HepG2 (cell line): ENCODE measurements at regions of chr9 and their contacts with region 1.

Region 1: DNA sequence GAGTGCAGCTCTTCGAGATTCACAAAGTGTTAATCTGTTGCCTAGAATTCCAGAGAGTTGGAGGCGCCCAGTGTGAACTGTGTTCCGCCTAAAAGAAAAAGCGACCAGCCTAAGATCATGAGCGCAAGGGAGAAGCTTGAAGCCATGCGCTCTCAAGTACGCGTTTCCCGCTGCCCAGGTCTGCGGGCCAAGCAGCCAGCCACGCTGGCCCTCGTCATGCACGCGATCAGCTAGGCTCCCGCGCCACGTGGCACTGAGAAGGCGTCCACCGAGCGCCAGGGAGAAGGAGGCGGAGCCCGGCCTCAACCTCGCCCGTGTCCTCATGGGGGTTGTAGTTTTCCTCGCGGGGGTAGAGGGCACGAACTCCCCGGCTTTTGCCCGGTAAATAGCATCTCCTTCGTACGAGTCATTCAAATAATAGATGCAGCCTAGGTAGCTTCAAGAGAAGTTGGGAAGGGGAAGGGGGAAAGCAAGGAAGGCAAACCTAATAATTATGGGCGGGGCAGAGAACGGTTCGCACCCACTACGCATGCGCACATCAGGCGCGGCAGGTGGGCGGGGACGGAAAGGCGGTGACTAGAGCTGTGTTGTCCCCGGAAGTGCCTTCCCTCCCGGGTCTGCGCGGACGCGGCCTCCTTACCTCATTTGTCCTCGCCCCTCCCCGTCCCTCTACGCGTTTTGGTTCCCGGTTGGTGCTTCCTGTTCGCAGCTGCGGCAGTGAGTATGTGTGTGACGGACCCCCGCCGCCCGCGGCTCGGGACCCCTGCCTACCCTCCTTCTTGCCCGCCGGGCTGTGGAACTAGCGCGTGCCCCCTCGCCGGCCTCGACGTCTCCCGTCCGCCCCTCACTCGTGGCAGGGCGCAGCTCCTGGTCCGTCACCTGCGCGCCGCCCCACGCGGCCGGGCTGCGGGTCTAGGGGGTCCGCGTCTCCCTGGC is at the start of gene ZCCHC7:
- DNase-seq: peak; percentile 87
- ATAC-seq: peak; percentile 98
- H3K4me3 ChIP-seq: peak within 1 kb of the TSS; percentile 69 to 87 (median 71)
- H3K27ac ChIP-seq: peak within 1 kb of the TSS; percentile 77
- H3K4me1 ChIP-seq: peaks cover 35% of the 10 kb centered on the region
- H3K27me3 ChIP-seq: no peaks in the 10 kb centered on the region
- CTCF ChIP-seq: no peak; the same call in 1 of the 2 replicates
- EP300 ChIP-seq: no peak
- POLR2A ChIP-seq: peak; percentile 88 to 91
- RAD21 ChIP-seq: no peak
- total RNA-seq, gene ZCCHC7: 13.6 and 15.9 TPM in 2 replicates

Region 2: GRCh38 chr9:36891341-36891959 is 228.7 kb before region 1 on chr9:
- CTCF ChIA-PET with region 1: no interaction called
- POLR2A ChIA-PET with region 1: no interaction called
- in situ Hi-C with region 1: no loop called
- intact Hi-C with region 1: no loop called
- DNase-seq: no peak
- ATAC-seq: no peak; the same call in 2 of the 3 replicates
- H3K4me3 ChIP-seq: no peak overlapping the region
- H3K27ac ChIP-seq: no peak overlapping the region
- H3K4me1 ChIP-seq: no peaks in the 10 kb centered on the region
- H3K27me3 ChIP-seq: peaks cover 1 to 48% of the 10 kb centered on the region in 2 experiments
- CTCF ChIP-seq: no peak
- EP300 ChIP-seq: no peak
- POLR2A ChIP-seq: no peak
- RAD21 ChIP-seq: no peak

Region 3: DNA sequence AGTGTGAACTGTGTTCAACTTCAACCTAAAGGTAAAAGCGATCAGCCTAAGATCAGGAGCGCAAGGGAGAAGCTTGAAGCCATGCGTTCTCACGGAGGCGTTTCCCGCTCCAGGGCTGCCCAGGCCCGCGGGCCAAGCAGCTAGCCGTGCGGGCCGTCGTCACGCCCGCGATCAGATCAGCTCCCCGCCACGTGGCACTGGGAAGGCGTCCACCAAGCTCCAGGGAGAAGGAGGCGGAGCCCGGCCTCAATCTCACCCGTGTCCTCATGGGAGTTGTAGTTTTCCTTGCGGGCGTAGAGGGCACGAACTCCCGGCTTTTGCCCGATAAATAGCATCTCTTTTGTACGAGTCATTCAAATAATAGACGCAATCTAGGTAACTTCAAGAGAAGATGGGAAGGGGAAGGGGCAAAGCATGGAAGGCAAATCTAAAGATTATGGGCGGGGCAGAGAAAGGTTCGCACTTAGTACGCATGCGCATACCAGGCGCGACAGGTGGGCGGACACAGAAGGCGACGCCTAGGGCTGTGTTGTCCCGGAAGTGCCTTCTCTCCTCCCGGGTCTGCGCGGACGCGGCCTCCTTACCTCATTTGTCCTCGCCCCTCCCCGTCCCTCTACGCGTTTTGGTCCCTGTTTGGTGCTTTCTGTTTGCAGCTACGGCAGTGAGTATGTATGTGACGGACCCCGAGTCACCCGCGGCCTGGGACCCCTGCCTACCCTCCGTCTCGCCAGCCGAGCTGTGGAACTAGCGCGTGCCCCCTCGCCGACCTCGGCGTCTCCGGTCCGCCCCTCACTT is 40.6 kb before region 1 on chr9:
- CTCF ChIA-PET with region 1: no interaction called
- POLR2A ChIA-PET with region 1: interaction called, 34 read pairs
- in situ Hi-C with region 1: no loop called
- intact Hi-C with region 1: no loop called
- DNase-seq: peak; percentile 91
- ATAC-seq: peak; percentile 98
- H3K4me3 ChIP-seq: peak overlapping the region; percentile 78 to 97 (median 87)
- H3K27ac ChIP-seq: peak overlapping the region; percentile 76
- H3K4me1 ChIP-seq: peaks cover 39% of the 10 kb centered on the region
- H3K27me3 ChIP-seq: 0 out of 5 replicates have a peak, but pooled peaks cover 0 to 3% of the 10 kb centered on the region in 2 experiments
- CTCF ChIP-seq: peak; percentile 16; the same call in 1 of the 2 replicates
- EP300 ChIP-seq: 0 out of 4 replicates have a peak, but pooled peaks of 1 of the 2 experiments have one; percentile 17
- POLR2A ChIP-seq: peak; percentile 80 to 84
- RAD21 ChIP-seq: peak; percentile 31; the same call in 1 of the 2 replicates

Region 4: DNA sequence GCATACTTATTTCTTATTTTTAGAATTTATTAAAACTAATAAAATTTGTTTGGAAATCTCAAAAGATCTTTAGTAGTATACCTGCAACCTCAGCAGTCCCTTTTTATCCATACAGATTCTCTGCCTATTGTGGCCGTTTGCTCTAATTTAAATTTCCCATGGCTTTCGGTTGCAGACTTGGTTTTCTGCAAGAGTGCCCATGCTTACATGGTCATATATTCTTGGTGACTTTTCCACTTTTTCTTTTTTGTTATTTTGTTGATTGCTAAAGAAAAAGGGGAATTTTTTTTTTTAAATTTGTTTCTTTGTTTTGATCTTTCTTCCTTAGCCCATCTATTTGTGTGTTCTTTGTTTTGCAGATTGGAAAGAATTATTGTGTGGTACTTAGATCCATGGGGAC is 20.8 kb after region 1 on chr9:
- CTCF ChIA-PET with region 1: no interaction called
- POLR2A ChIA-PET with region 1: interaction called, 12 read pairs
- in situ Hi-C with region 1: no loop called
- intact Hi-C with region 1: no loop called
- DNase-seq: no peak
- ATAC-seq: no peak
- H3K4me3 ChIP-seq: no peak overlapping the region
- H3K27ac ChIP-seq: no peak overlapping the region
- H3K4me1 ChIP-seq: peaks cover 8% of the 10 kb centered on the region
- H3K27me3 ChIP-seq: no peaks in the 10 kb centered on the region
- CTCF ChIP-seq: no peak
- EP300 ChIP-seq: no peak
- POLR2A ChIP-seq: no peak
- RAD21 ChIP-seq: no peak

Region 5: DNA sequence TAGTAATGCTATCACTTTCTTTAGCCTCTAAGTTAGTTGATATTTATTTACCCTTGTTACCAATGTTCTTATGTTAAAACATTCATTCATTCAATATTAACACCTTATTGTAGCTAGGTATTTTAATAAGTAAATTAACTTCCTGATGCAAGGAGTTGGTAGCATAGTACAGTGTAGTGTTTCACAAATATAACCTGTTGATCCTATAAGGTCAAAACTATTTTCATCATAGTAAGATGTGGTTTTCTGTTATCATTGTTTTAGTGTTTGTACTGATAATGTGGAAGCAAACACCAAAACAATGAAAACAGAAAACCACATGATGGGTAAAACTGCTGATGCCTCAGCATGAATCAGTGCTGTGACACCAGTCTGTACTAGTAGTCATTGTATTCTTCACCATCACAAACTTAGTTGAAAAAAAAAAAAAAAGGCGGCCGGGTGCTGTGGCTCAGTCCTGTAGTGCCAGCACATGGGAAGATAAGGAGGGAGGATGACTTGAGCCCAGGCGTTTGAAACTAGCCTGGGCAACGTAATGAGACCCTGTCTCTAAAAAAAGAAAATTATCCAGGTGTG is 36.7 kb after region 1 on chr9:
- CTCF ChIA-PET with region 1: no interaction called
- POLR2A ChIA-PET with region 1: no interaction called
- in situ Hi-C with region 1: no loop called
- intact Hi-C with region 1: no loop called
- DNase-seq: no peak
- ATAC-seq: no peak
- H3K4me3 ChIP-seq: no peak overlapping the region
- H3K27ac ChIP-seq: no peak overlapping the region
- H3K4me1 ChIP-seq: no peaks in the 10 kb centered on the region
- H3K27me3 ChIP-seq: no peaks in the 10 kb centered on the region
- CTCF ChIP-seq: no peak
- EP300 ChIP-seq: no peak
- POLR2A ChIP-seq: no peak
- RAD21 ChIP-seq: no peak